Right ventricle myocardium inferior (tissue), 1 donor: ENCODE measurements at regions of chr1 and their contacts with region 1.

Region 1: DNA sequence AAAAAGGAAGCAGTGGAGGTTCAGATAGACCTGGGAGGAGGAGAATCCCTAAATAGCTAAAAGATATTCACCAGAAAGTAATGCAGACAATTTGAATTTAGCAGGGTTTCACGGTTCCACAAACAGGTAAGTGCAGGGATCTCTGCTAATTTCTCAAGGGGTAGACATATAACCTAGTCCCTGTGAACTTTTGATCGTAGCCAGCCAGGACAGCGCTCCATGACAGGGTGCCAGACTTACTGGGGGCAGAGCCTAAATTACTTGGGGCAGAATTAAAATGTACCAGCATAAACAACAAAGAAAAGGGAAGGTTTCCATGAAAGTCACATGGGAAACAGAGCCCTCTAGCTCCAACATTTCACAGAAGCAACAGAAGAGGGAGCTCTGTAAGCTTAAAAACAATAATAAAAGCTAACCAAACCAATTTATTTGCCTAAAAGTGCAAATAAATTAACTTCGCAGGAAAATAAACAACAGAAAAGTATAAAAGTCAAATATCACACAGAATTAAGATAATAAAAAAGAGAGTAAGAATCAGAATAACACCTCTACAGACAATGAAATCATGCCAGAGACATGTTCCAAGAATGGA is 198.3 kb downstream of the DUSP10 start:
- DNase-seq: no peak
- ATAC-seq: peak; percentile 34

Region 2: DNA sequence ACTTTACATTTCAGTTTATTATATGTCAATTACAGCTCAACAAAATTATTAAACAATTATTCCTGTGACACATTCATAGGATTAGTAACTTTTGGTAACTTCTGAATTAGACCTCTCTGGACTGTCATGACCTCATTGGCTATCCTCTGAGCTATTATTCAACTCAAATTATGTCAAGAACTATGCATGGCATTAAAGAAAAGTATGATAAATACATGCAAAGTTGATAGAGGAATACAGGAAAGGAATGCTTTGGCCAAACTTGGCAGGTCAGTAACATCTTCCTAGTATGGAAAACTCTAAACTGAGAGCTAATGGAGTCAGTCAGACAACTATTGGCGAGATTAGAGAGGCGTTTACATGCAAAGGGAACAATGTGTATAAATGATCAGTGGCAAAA is 39.8 kb after region 1 on chr1:
- intact Hi-C with region 1: no loop called
- DNase-seq: no peak
- ATAC-seq: no peak

Region 3: GRCh38 chr1:221637641-221638041 is 94.0 kb after region 1 on chr1:
- intact Hi-C with region 1: loop called (anchors 5 kb)
- DNase-seq: no peak
- ATAC-seq: peak; percentile 75

Region 4: GRCh38 chr1:222171005-222171404 is 627.4 kb after region 1 on chr1:
- intact Hi-C with region 1: loop called (anchors 2 kb)
- DNase-seq: no peak
- ATAC-seq: no peak